Motor neuron (in vitro differentiated cells): ENCODE measurements at regions of chr6 and their contacts with region 1.

Region 1: GRCh38 chr6:118252474-118252873 is 295.6 kb upstream of the PLN start:
- ATAC-seq: peak in 1 of 8 experiments; percentile 25
- H3K4me3 ChIP-seq: no peak overlapping the region
- H3K27ac ChIP-seq: no peak overlapping the region
- H3K4me1 ChIP-seq: no peaks in the 10 kb centered on the region

Region 2: DNA sequence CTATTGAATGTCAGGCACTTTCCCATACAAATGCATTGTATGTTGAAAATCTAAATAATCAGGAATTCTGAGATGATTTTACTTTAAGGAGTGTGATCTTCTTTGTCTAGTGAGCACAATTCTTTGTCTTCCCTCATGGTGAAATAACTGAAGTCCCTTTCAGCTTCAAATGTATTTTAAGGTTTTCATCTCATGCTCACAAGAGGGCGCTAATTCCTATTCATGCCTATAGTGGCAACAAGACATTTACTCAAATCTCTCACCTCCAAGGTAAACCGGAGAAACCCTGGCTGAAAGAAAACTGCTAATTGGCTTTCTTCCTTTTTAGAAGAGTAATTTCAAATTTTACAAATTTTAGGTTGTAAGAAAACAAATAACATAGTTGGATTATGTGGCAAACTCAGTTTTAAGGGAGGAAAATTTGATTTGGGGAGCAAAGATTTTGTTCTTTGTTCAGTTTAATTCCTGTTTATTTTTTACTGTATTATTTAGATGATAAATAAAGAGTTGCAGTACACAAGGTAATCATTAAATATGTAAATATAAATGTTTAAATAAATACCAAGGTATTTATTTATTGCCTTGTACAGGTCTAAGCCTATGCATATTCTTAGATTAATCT is 276.3 kb before region 1 on chr6:
- in situ Hi-C with region 1: loop called in 2 of 9 experiments (anchors 10 to 25 kb)
- ATAC-seq: peak in 4 of 8 experiments; percentile 36 to 50 (median 42)
- H3K4me3 ChIP-seq: no peak overlapping the region
- H3K27ac ChIP-seq: no peak overlapping the region
- H3K4me1 ChIP-seq: peaks cover 2 to 3% of the 10 kb centered on the region in 2 donors